ENCODE measurements at regions of chr3 and their contacts with region 1.

Region 1: DNA sequence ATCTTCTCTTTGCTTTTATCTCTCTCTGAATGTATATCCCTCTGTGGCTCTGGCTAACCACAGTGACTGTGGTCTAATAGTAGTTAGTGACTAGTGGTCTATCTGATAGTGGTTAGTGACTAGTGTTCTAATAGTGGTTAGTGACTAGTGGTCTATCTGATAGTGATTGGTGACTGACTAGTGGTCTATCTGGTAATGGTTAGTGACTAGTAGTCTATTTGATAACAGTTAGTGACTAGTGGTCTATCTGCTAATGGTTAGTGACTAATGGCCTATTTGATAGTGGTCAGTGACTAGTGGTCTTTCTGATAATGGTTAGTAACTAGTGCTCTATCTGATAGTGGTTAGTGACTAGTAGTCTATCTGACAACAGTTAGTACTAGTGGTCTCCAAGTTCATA is 110.5 kb downstream of the MDFIC2 start:
- DNase-seq: no peak
- ATAC-seq: no peak
- H3K4me3 ChIP-seq: no peak overlapping the region
- H3K4me3 Mint-ChIP-seq: no peak overlapping the region
- H3K27ac ChIP-seq: no peak overlapping the region
- H3K27ac Mint-ChIP-seq: no peak overlapping the region
- H3K4me1 ChIP-seq: no peaks in the 10 kb centered on the region
- H3K4me1 Mint-ChIP-seq: no peaks in the 10 kb centered on the region
- H3K27me3 ChIP-seq: no peaks in the 10 kb centered on the region
- H3K27me3 Mint-ChIP-seq: peaks cover 0 to 24% (median 22%) of the 10 kb centered on the region in 5 donors

Region 2: DNA sequence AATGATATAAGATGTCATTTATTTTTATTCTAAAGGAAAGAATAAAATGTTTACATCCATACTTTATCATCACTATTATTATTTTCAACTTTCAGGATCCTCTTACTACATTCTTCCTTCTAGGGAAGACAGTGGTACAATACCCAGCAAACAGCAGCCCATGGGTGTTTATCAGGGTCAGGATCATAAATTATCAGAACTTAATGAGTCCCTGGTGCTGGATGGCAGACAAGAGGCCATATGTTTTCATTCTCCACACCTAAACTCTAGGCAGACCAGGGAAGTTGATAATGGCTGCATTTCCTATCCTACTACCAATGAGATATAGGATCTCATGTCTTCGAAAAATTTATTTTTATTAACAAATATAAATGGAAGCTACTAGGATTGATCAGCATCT is 74.8 kb before region 1 on chr3:
- CTCF ChIA-PET with region 1: no interaction called
- POLR2A ChIA-PET with region 1: no interaction called
- intact Hi-C with region 1: loop called in 1 of 2 experiments (anchors 2 kb)
- DNase-seq: no peak
- ATAC-seq: no peak
- H3K4me3 ChIP-seq: no peak overlapping the region
- H3K4me3 Mint-ChIP-seq: no peak overlapping the region
- H3K27ac ChIP-seq: no peak overlapping the region
- H3K27ac Mint-ChIP-seq: no peak overlapping the region
- H3K4me1 ChIP-seq: no peaks in the 10 kb centered on the region
- H3K4me1 Mint-ChIP-seq: peaks cover 0 to 2% (median 0%) of the 10 kb centered on the region in 7 donors
- H3K27me3 ChIP-seq: no peaks in the 10 kb centered on the region
- H3K27me3 Mint-ChIP-seq: peaks cover 0 to 15% (median 12%) of the 10 kb centered on the region in 5 donors